ENCODE measurements at regions of chr3 and their contacts with region 1.

Region 1: GRCh38 chr3:182063742-182064141 is 352.0 kb downstream of the SOX2 start:
- DNase-seq: no peak
- ATAC-seq: no peak
- H3K4me3 ChIP-seq: no peak overlapping the region
- H3K4me3 Mint-ChIP-seq: no peak overlapping the region
- H3K27ac ChIP-seq: no peak overlapping the region
- H3K27ac Mint-ChIP-seq: no peak overlapping the region
- H3K4me1 ChIP-seq: no peaks in the 10 kb centered on the region
- H3K4me1 Mint-ChIP-seq: no peaks in the 10 kb centered on the region
- H3K27me3 ChIP-seq: no peaks in the 10 kb centered on the region
- H3K27me3 Mint-ChIP-seq: no peaks in the 10 kb centered on the region
- CTCF ChIP-seq: no peak

Region 2: DNA sequence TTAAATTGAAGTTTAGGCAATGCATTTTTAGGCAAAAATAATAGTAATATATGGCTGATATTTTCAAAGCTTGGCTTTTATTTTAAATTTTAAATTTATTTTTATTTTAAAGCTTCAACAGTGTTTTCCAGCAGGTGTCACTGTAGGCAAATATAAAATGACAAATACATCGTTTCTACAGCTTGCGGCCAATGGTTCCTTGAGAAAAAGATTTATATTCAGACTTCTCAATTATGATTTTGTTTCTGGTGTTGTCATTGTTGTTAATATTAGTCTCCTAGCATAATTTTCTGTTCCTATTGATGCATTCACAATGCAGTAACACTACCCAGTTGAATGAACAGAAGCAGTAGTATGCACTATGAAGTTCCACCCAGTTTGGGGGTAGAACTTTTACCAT is 853.5 kb before region 1 on chr3:
- CTCF ChIA-PET with region 1: no interaction called
- POLR2A ChIA-PET with region 1: no interaction called
- intact Hi-C with region 1: loop called in 1 of 2 experiments (anchors 5 kb)
- DNase-seq: no peak
- ATAC-seq: no peak
- H3K4me3 ChIP-seq: no peak overlapping the region
- H3K4me3 Mint-ChIP-seq: no peak overlapping the region
- H3K27ac ChIP-seq: no peak overlapping the region
- H3K27ac Mint-ChIP-seq: no peak overlapping the region
- H3K4me1 ChIP-seq: no peaks in the 10 kb centered on the region
- H3K4me1 Mint-ChIP-seq: no peaks in the 10 kb centered on the region
- H3K27me3 ChIP-seq: no peaks in the 10 kb centered on the region
- H3K27me3 Mint-ChIP-seq: peaks cover 13% of the 10 kb centered on the region
- CTCF ChIP-seq: no peak

Region 3: GRCh38 chr3:181756645-181757297 is 307.0 kb before region 1 on chr3:
- CTCF ChIA-PET with region 1: no interaction called
- POLR2A ChIA-PET with region 1: no interaction called
- intact Hi-C with region 1: no loop called
- DNase-seq: no peak
- ATAC-seq: no peak
- H3K4me3 ChIP-seq: no peak overlapping the region
- H3K4me3 Mint-ChIP-seq: no peak overlapping the region
- H3K27ac ChIP-seq: no peak overlapping the region
- H3K27ac Mint-ChIP-seq: no peak overlapping the region
- H3K4me1 ChIP-seq: no peaks in the 10 kb centered on the region
- H3K4me1 Mint-ChIP-seq: no peaks in the 10 kb centered on the region
- H3K27me3 ChIP-seq: no peaks in the 10 kb centered on the region
- H3K27me3 Mint-ChIP-seq: peaks cover 10% of the 10 kb centered on the region
- CTCF ChIP-seq: no peak

Region 4: GRCh38 chr3:182041341-182042291 is 22.1 kb before region 1 on chr3:
- CTCF ChIA-PET with region 1: no interaction called
- POLR2A ChIA-PET with region 1: no interaction called
- intact Hi-C with region 1: no loop called
- DNase-seq: no peak
- ATAC-seq: no peak
- H3K4me3 ChIP-seq: no peak overlapping the region
- H3K4me3 Mint-ChIP-seq: no peak overlapping the region
- H3K27ac ChIP-seq: no peak overlapping the region
- H3K27ac Mint-ChIP-seq: no peak overlapping the region
- H3K4me1 ChIP-seq: no peaks in the 10 kb centered on the region
- H3K4me1 Mint-ChIP-seq: no peaks in the 10 kb centered on the region
- H3K27me3 ChIP-seq: no peaks in the 10 kb centered on the region
- H3K27me3 Mint-ChIP-seq: no peaks in the 10 kb centered on the region
- CTCF ChIP-seq: no peak

Region 5: GRCh38 chr3:182078316-182078715 is 14.6 kb after region 1 on chr3:
- CTCF ChIA-PET with region 1: no interaction called
- POLR2A ChIA-PET with region 1: no interaction called
- intact Hi-C with region 1: no loop called
- DNase-seq: no peak
- ATAC-seq: no peak
- H3K4me3 ChIP-seq: no peak overlapping the region
- H3K4me3 Mint-ChIP-seq: no peak overlapping the region
- H3K27ac ChIP-seq: no peak overlapping the region
- H3K27ac Mint-ChIP-seq: no peak overlapping the region
- H3K4me1 ChIP-seq: no peaks in the 10 kb centered on the region
- H3K4me1 Mint-ChIP-seq: no peaks in the 10 kb centered on the region
- H3K27me3 ChIP-seq: no peaks in the 10 kb centered on the region
- H3K27me3 Mint-ChIP-seq: peaks cover 2% of the 10 kb centered on the region
- CTCF ChIP-seq: no peak

Measured in CD8-positive, alpha-beta T cell (primary cell).